Activated T-helper 1 cell treated with anti-CD3 and anti-CD28 coated beads, Interleukin-12 subunit alpha, Interleukin-12 subunit beta, Interleukin-2, Interleukin-4 antibody, amounts not matched to agents 30 ng/mL and 10 ng/mL and 1 ng/mL, durations not matched to agents 14 hours and 24 hours and 36 hours (primary cell): ENCODE measurements at regions of chr2 and their contacts with region 1.

Region 1: DNA sequence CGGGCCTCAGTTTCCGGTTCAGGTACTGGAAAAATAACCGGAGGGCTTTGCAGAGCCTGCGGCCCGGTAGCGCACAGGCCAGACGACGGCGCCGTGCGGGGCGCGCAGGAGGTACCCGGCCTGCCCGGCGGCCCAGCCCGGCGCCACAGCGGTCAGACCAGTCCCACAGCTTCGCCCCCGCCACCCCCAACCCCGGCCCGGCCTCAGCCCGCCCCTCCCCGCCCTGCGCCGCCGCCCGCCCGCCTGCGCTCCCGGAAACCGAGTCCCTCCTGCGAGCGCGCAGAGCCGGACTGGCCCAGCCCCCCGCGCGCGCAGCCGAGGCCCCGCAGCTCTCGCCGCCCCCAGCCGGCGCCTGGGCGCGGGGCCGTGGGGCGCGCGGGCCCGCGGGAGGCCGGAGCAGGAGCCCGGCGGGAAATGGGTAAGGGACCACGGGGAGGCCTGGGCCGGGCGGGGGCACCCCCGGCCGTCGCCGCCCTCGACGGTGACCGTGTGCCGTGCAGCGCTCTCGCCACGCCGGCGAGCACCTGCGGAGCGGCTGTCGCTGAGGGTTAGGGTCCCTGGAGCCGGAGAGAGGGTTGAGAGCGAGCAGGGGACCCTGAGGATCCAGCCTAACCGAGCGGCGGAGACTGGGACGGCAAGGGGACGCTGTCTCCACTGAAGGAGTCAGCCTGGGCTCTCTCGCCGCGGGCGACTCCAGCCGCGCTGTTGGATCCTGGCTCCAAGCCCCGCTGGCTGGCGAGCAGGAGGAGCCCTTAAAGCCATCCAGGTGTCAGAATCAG is 16.5 kb upstream of the PSD4 start:
- DNase-seq: peak; percentile 48
- H3K4me3 Mint-ChIP-seq: peak overlapping the region; percentile 80
- H3K27ac Mint-ChIP-seq: peak overlapping the region; percentile 55
- H3K4me1 Mint-ChIP-seq: peaks cover 33% of the 10 kb centered on the region
- H3K27me3 Mint-ChIP-seq: no peaks in the 10 kb centered on the region

Region 2: GRCh38 chr2:112706170-112706664 is 451.1 kb before region 1 on chr2:
- intact Hi-C with region 1: loop called (anchors 2 kb)
- DNase-seq: peak; percentile 79
- H3K4me3 Mint-ChIP-seq: peak overlapping the region; percentile 79
- H3K27ac Mint-ChIP-seq: peak overlapping the region; percentile 93
- H3K4me1 Mint-ChIP-seq: peaks cover 72% of the 10 kb centered on the region
- H3K27me3 Mint-ChIP-seq: no peaks in the 10 kb centered on the region

Region 3: GRCh38 chr2:113080134-113080533 is 77.2 kb before region 1 on chr2:
- intact Hi-C with region 1: no loop called
- DNase-seq: peak; percentile 28
- H3K4me3 Mint-ChIP-seq: no peak overlapping the region
- H3K27ac Mint-ChIP-seq: no peak overlapping the region
- H3K4me1 Mint-ChIP-seq: peaks cover 17% of the 10 kb centered on the region
- H3K27me3 Mint-ChIP-seq: peaks cover 2% of the 10 kb centered on the region

Region 4: GRCh38 chr2:113198790-113199612 is 41.7 kb after region 1 on chr2:
- intact Hi-C with region 1: loop called (anchors 5 kb)
- DNase-seq: peak; percentile 70
- H3K4me3 Mint-ChIP-seq: no peak overlapping the region
- H3K27ac Mint-ChIP-seq: peak overlapping the region; percentile 40
- H3K4me1 Mint-ChIP-seq: peaks cover 45% of the 10 kb centered on the region
- H3K27me3 Mint-ChIP-seq: no peaks in the 10 kb centered on the region